CD8-positive, alpha-beta T cell (primary cell): ENCODE measurements at regions of chr6 and their contacts with region 1.

Region 1: GRCh38 chr6:46090115-46091079 is 39.4 kb upstream of the ENPP4 start:
- DNase-seq: peak; percentile 6 to 73 (median 62)
- ATAC-seq: no peak
- H3K4me3 ChIP-seq: no peak overlapping the region
- H3K4me3 Mint-ChIP-seq: no peak overlapping the region
- H3K27ac ChIP-seq: no peak overlapping the region
- H3K27ac Mint-ChIP-seq: no peak overlapping the region
- H3K4me1 ChIP-seq: no peaks in the 10 kb centered on the region
- H3K4me1 Mint-ChIP-seq: no peaks in the 10 kb centered on the region
- H3K27me3 ChIP-seq: no peaks in the 10 kb centered on the region
- H3K27me3 Mint-ChIP-seq: peaks cover 36% of the 10 kb centered on the region
- CTCF ChIP-seq: peak; percentile 95

Region 2: GRCh38 chr6:45930420-45931040 is 159.9 kb before region 1 on chr6:
- CTCF ChIA-PET with region 1: interaction called, 15 read pairs
- POLR2A ChIA-PET with region 1: no interaction called
- intact Hi-C with region 1: loop called (anchors 1 to 5 kb)
- DNase-seq: peak; percentile 16 to 73 (median 57)
- ATAC-seq: peak; percentile 40
- H3K4me3 ChIP-seq: no peak overlapping the region
- H3K4me3 Mint-ChIP-seq: no peak overlapping the region
- H3K27ac ChIP-seq: no peak overlapping the region
- H3K27ac Mint-ChIP-seq: no peak overlapping the region
- H3K4me1 ChIP-seq: no peaks in the 10 kb centered on the region
- H3K4me1 Mint-ChIP-seq: no peaks in the 10 kb centered on the region
- H3K27me3 ChIP-seq: no peaks in the 10 kb centered on the region
- H3K27me3 Mint-ChIP-seq: no peaks in the 10 kb centered on the region
- CTCF ChIP-seq: peak; percentile 89

Region 3: DNA sequence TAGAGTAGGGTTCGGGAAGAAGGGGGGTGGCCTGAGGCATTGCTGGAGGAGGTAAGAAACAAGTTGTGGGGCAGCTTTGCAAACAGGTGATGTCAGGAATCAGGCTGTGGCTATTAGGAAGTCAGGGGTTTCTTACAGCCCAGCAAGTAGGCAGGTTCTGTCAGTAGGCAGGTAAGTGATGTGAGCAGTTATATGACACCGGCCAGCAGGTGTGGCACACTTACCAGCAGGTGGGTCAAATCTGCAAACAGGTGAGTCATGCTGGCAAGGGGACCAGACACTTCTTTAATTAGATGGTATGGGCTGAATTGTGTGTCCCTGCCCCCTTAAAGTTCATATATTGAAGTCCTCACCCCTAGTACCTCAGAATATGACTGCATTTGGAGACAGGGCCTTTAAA is 23.0 kb after region 1 on chr6:
- CTCF ChIA-PET with region 1: interaction called, 10 read pairs
- POLR2A ChIA-PET with region 1: no interaction called
- intact Hi-C with region 1: no loop called
- DNase-seq: no peak
- ATAC-seq: no peak
- H3K4me3 ChIP-seq: no peak overlapping the region
- H3K4me3 Mint-ChIP-seq: no peak overlapping the region
- H3K27ac ChIP-seq: no peak overlapping the region
- H3K27ac Mint-ChIP-seq: no peak overlapping the region
- H3K4me1 ChIP-seq: no peaks in the 10 kb centered on the region
- H3K4me1 Mint-ChIP-seq: peaks cover 8% of the 10 kb centered on the region
- H3K27me3 ChIP-seq: no peaks in the 10 kb centered on the region
- H3K27me3 Mint-ChIP-seq: no peaks in the 10 kb centered on the region
- CTCF ChIP-seq: no peak

Region 4: DNA sequence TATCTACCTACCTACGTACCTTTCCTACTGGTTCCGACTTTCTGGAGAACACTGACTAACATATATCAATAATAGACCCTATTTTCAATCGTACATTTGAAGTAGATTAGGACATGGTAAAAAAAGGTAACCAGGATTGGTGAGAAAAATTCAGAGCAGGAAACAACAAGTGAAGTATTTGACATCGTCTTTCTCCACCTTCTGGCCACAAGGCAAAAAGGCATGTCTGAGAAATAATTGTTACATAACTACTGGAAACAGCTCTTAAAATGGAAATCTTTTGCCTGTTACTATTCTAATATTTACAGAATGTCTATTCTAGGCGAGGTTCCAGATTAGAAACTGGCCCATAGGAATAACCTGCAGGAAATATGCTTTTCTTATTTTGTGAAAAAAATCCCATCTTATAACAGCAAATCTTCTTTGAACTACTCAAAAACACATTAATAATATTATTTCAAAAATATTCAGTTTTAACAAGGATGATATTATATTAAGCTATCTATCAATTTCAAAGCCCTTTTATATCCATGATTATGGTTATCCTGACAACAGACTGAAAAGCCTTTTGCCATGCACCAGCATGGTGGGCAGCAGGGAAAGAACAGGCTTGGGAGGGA is 320.0 kb after region 1 on chr6:
- CTCF ChIA-PET with region 1: interaction called, 115 read pairs
- POLR2A ChIA-PET with region 1: no interaction called
- intact Hi-C with region 1: loop called in 1 of 2 experiments (anchors 1 kb)
- DNase-seq: peak in 3 of 9 experiments; percentile 31 to 79 (median 73)
- ATAC-seq: no peak
- H3K4me3 ChIP-seq: no peak overlapping the region
- H3K4me3 Mint-ChIP-seq: no peak overlapping the region
- H3K27ac ChIP-seq: no peak overlapping the region
- H3K27ac Mint-ChIP-seq: no peak overlapping the region
- H3K4me1 ChIP-seq: no peaks in the 10 kb centered on the region
- H3K4me1 Mint-ChIP-seq: no peaks in the 10 kb centered on the region
- H3K27me3 ChIP-seq: no peaks in the 10 kb centered on the region
- H3K27me3 Mint-ChIP-seq: no peaks in the 10 kb centered on the region
- CTCF ChIP-seq: peak; percentile 63

Region 5: GRCh38 chr6:46626228-46626909 is 536.0 kb after region 1 on chr6:
- CTCF ChIA-PET with region 1: interaction called, 4 read pairs
- POLR2A ChIA-PET with region 1: no interaction called
- intact Hi-C with region 1: loop called (anchors 1 to 2 kb)
- DNase-seq: peak in 2 of 9 experiments; percentile 17 to 18
- ATAC-seq: no peak
- H3K4me3 ChIP-seq: no peak overlapping the region
- H3K4me3 Mint-ChIP-seq: no peak overlapping the region
- H3K27ac ChIP-seq: no peak overlapping the region
- H3K27ac Mint-ChIP-seq: no peak overlapping the region
- H3K4me1 ChIP-seq: peaks cover 7% of the 10 kb centered on the region
- H3K4me1 Mint-ChIP-seq: no peaks in the 10 kb centered on the region
- H3K27me3 ChIP-seq: no peaks in the 10 kb centered on the region
- H3K27me3 Mint-ChIP-seq: peaks cover 17% of the 10 kb centered on the region
- CTCF ChIP-seq: peak; percentile 15

Region 6: GRCh38 chr6:46862381-46862780 is 772.0 kb after region 1 on chr6:
- CTCF ChIA-PET with region 1: no interaction called
- POLR2A ChIA-PET with region 1: no interaction called
- intact Hi-C with region 1: loop called in 1 of 2 experiments (anchors 5 kb)
- DNase-seq: no peak
- ATAC-seq: no peak
- H3K4me3 ChIP-seq: no peak overlapping the region
- H3K4me3 Mint-ChIP-seq: no peak overlapping the region
- H3K27ac ChIP-seq: no peak overlapping the region
- H3K27ac Mint-ChIP-seq: no peak overlapping the region
- H3K4me1 ChIP-seq: no peaks in the 10 kb centered on the region
- H3K4me1 Mint-ChIP-seq: no peaks in the 10 kb centered on the region
- H3K27me3 ChIP-seq: no peaks in the 10 kb centered on the region
- H3K27me3 Mint-ChIP-seq: peaks cover 7% of the 10 kb centered on the region
- CTCF ChIP-seq: no peak

Region 7: GRCh38 chr6:47787620-47788497 is 1697.5 kb after region 1 on chr6:
- CTCF ChIA-PET with region 1: no interaction called
- POLR2A ChIA-PET with region 1: no interaction called
- intact Hi-C with region 1: loop called in 1 of 2 experiments (anchors 10 kb)
- DNase-seq: peak; percentile 6 to 64 (median 42)
- ATAC-seq: peak; percentile 83
- H3K4me3 ChIP-seq: no peak overlapping the region
- H3K4me3 Mint-ChIP-seq: no peak overlapping the region
- H3K27ac ChIP-seq: no peak overlapping the region
- H3K27ac Mint-ChIP-seq: no peak overlapping the region
- H3K4me1 ChIP-seq: peaks cover 3% of the 10 kb centered on the region
- H3K4me1 Mint-ChIP-seq: peaks cover 6% of the 10 kb centered on the region
- H3K27me3 ChIP-seq: peaks cover 0 to 8% of the 10 kb centered on the region in 2 experiments
- H3K27me3 Mint-ChIP-seq: peaks cover 34% of the 10 kb centered on the region
- CTCF ChIP-seq: peak; percentile 91